Right cardiac atrium (tissue), 5 donors: ENCODE measurements at regions of chr12 and their contacts with region 1.

Region 1: DNA sequence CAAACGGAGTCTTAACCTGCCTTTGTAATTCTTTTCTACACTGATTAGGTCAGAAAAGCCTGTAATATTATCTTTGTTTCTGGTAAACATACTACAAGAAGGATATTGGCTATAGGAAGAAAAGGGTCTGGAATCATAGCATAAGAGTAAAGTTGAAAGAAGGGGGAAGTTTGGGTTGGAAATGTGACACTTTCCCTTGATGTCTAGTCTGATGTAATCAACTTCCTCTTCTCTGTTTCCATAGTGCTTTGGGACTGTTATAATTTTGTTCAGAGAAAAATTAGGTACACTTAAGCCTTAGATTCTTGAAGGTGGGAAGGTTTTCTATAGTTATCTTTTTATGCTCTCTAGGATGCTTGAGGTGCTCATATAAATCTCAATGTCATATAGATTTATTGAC is 322.2 kb downstream of the AEBP2 start:
- DNase-seq: no peak
- ATAC-seq: no peak
- H3K4me3 ChIP-seq: no peak overlapping the region
- H3K27ac ChIP-seq: no peak overlapping the region
- H3K4me1 ChIP-seq: no peaks in the 10 kb centered on the region
- H3K27me3 ChIP-seq: no peaks in the 10 kb centered on the region

Region 2: GRCh38 chr12:19517583-19517982 is 243.9 kb before region 1 on chr12:
- intact Hi-C with region 1: no loop called
- DNase-seq: no peak
- ATAC-seq: no peak
- H3K4me3 ChIP-seq: no peak overlapping the region
- H3K27ac ChIP-seq: no peak overlapping the region
- H3K4me1 ChIP-seq: no peaks in the 10 kb centered on the region
- H3K27me3 ChIP-seq: no peaks in the 10 kb centered on the region

Region 3: DNA sequence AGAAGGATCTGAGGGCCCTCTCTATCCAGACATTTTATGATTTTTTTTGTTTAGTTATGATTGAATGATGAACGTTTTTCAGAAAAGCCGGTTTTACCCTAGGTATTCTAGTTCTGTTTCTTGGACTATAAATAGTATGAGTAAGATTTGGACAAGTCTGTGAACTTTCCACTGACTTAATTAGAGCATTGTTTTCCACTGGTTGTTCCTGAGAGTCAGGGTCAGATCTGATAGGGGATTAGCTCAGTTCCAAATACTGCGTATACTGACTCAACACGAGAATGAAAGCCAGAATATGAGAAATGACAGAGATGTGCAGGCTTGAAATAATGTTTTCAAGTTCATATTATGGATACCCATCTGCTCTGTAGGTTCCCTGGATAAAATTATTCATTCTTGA is 39.4 kb after region 1 on chr12:
- intact Hi-C with region 1: no loop called
- DNase-seq: no peak
- ATAC-seq: peak; percentile 84 to 96
- H3K4me3 ChIP-seq: no peak overlapping the region
- H3K27ac ChIP-seq: no peak overlapping the region
- H3K4me1 ChIP-seq: no peaks in the 10 kb centered on the region
- H3K27me3 ChIP-seq: no peaks in the 10 kb centered on the region

Region 4: DNA sequence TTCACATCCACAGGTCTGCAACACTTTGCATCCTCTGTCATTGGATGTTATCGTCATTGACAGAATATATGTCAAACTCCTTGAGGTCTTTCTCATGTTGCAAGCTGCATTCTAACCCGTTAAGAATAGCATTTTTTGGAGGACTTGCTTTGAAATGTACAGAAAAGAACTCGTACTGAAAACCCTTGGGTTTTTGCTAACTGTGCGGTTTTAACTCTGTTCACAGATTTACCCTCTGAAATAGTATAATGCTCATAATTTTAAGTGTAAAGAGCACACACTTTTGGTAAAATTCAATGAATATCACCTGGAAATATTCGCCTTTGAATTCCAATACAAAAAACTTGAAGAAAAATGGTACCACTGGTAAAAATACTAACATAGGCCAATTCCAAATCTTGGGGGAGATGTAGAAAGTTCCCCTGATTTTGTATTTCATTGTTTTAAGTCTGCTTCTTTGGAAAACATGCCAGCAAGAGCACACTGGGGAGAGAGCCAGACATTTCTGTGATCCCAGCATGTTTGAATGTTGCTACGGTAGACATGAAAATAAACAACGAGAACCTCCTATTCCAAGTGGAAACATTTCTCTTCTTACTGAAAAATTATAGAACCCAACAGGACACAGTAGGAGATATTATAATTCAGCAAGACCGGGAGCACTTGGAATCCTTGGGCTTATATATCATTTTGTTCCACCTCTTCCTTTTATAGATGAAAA is 123.8 kb after region 1 on chr12:
- intact Hi-C with region 1: loop called in 1 of 4 experiments (anchors 5 kb)
- DNase-seq: peak in 1 of 3 donors; percentile 68
- ATAC-seq: peak; percentile 68 to 72
- H3K4me3 ChIP-seq: no peak overlapping the region
- H3K27ac ChIP-seq: no peak overlapping the region
- H3K4me1 ChIP-seq: no peaks in the 10 kb centered on the region
- H3K27me3 ChIP-seq: no peaks in the 10 kb centered on the region

Region 5: DNA sequence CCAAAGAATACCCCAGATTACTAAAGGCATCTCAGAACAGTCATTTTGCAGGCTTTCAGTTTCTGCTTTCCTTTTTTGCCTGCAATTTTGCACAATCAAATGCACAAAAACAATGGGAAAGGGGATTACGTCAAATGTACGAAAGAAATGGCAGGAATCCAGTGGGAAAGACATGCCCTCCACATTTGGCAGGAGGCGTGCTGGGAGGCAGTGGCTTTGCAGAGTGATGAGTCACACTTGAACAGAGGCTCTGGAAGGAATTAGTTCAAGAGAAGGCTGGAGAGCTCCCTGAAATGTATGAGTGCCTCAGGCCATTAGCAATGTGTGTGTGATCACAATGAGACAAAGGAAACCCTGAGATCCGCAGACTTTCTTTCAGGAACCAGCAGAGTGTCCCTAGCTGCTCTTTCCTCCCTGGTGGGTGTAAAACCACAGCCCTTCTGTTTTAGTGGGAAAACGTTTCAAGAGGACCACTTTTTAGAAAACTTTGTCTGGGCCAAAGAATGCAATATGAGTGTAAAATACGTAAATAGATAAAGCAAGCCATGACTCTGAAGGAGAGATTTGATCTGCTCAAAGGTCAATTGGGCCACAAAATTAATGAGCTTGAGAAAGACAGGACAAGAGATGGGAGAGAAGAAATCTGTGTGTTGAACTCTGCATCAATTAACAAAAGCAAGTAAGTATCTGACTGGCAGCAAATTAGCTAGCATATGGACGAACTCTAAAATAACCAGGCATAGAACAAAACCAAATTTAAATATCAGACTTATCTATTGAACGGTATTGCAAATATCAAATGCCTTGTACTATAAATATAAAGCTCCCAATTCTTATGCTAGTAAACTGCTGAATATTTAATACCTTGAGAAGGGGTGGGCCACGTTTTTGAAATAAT is 451.4 kb after region 1 on chr12:
- intact Hi-C with region 1: loop called in 1 of 4 experiments (anchors 10 kb)
- DNase-seq: peak; percentile 88 to 93 (median 92)
- ATAC-seq: peak; percentile 99 to 100
- H3K4me3 ChIP-seq: no peak overlapping the region
- H3K27ac ChIP-seq: peak overlapping the region; percentile 90
- H3K4me1 ChIP-seq: no peaks in the 10 kb centered on the region
- H3K27me3 ChIP-seq: no peaks in the 10 kb centered on the region